CD4-positive, alpha-beta memory T cell (primary cell): ENCODE measurements at regions of chr11 and their contacts with region 1.

Region 1: GRCh38 chr11:124415356-124415923 is 9.2 kb downstream of the OR8B4 start:
- DNase-seq: peak in 2 of 5 donors; percentile 9 to 11
- H3K4me3 ChIP-seq: no peak overlapping the region
- H3K4me3 Mint-ChIP-seq: no peak overlapping the region
- H3K27ac ChIP-seq: no peak overlapping the region
- H3K27ac Mint-ChIP-seq: no peak overlapping the region
- H3K4me1 ChIP-seq: no peaks in the 10 kb centered on the region
- H3K4me1 Mint-ChIP-seq: peaks cover 0 to 1% (median 0%) of the 10 kb centered on the region in 4 donors
- H3K27me3 ChIP-seq: no peaks in the 10 kb centered on the region
- H3K27me3 Mint-ChIP-seq: peaks cover 5 to 11% of the 10 kb centered on the region in 2 donors

Region 2: GRCh38 chr11:124586238-124586860 is 170.9 kb after region 1 on chr11:
- CTCF ChIA-PET with region 1: interaction called, 3 read pairs
- POLR2A ChIA-PET with region 1: no interaction called
- intact Hi-C with region 1: loop called (anchors 1 kb)
- DNase-seq: peak in 4 of 5 donors; percentile 8 to 22 (median 16)
- H3K4me3 ChIP-seq: no peak overlapping the region
- H3K4me3 Mint-ChIP-seq: no peak overlapping the region
- H3K27ac ChIP-seq: no peak overlapping the region
- H3K27ac Mint-ChIP-seq: no peak overlapping the region
- H3K4me1 ChIP-seq: no peaks in the 10 kb centered on the region
- H3K4me1 Mint-ChIP-seq: no peaks in the 10 kb centered on the region
- H3K27me3 ChIP-seq: no peaks in the 10 kb centered on the region
- H3K27me3 Mint-ChIP-seq: peaks cover 14 to 16% of the 10 kb centered on the region in 2 donors